T-cell (primary cell): ENCODE measurements at regions of chr3 and their contacts with region 1.

Region 1: GRCh38 chr3:160531311-160531710 is 34.1 kb downstream of the KPNA4 start:
- DNase-seq: no peak
- ATAC-seq: no peak
- H3K4me3 ChIP-seq: no peak overlapping the region
- H3K4me3 Mint-ChIP-seq: no peak overlapping the region
- H3K27ac ChIP-seq: no peak overlapping the region
- H3K27ac Mint-ChIP-seq: peak overlapping the region in 1 of 2 donors; percentile 53
- H3K4me1 ChIP-seq: no peaks in the 10 kb centered on the region
- H3K4me1 Mint-ChIP-seq: peaks cover 2 to 5% (median 3%) of the 10 kb centered on the region in 3 donors
- H3K27me3 ChIP-seq: no peaks in the 10 kb centered on the region
- H3K27me3 Mint-ChIP-seq: no peaks in the 10 kb centered on the region

Region 2: GRCh38 chr3:160454995-160455394 is 76.3 kb before region 1 on chr3:
- CTCF ChIA-PET with region 1: no interaction called
- POLR2A ChIA-PET with region 1: interaction called in 1 of 2 experiments, 12 read pairs
- DNase-seq: no peak
- ATAC-seq: no peak
- H3K4me3 ChIP-seq: no peak overlapping the region
- H3K4me3 Mint-ChIP-seq: no peak overlapping the region
- H3K27ac ChIP-seq: no peak overlapping the region
- H3K27ac Mint-ChIP-seq: no peak overlapping the region
- H3K4me1 ChIP-seq: peaks cover 0 to 4% of the 10 kb centered on the region in 2 experiments
- H3K4me1 Mint-ChIP-seq: peaks cover 5 to 8% (median 7%) of the 10 kb centered on the region in 3 donors
- H3K27me3 ChIP-seq: peaks cover 0 to 7% of the 10 kb centered on the region in 2 experiments
- H3K27me3 Mint-ChIP-seq: no peaks in the 10 kb centered on the region

Region 3: GRCh38 chr3:160498202-160498601 is 33.1 kb before region 1 on chr3:
- CTCF ChIA-PET with region 1: no interaction called
- POLR2A ChIA-PET with region 1: no interaction called
- DNase-seq: no peak
- ATAC-seq: no peak
- H3K4me3 ChIP-seq: no peak overlapping the region
- H3K4me3 Mint-ChIP-seq: no peak overlapping the region
- H3K27ac ChIP-seq: no peak overlapping the region
- H3K27ac Mint-ChIP-seq: no peak overlapping the region
- H3K4me1 ChIP-seq: no peaks in the 10 kb centered on the region
- H3K4me1 Mint-ChIP-seq: no peaks in the 10 kb centered on the region
- H3K27me3 ChIP-seq: no peaks in the 10 kb centered on the region
- H3K27me3 Mint-ChIP-seq: no peaks in the 10 kb centered on the region

Region 4: GRCh38 chr3:160616716-160617115 is 85.4 kb after region 1 on chr3:
- CTCF ChIA-PET with region 1: no interaction called
- POLR2A ChIA-PET with region 1: no interaction called
- DNase-seq: no peak
- ATAC-seq: no peak
- H3K4me3 ChIP-seq: no peak overlapping the region
- H3K4me3 Mint-ChIP-seq: no peak overlapping the region
- H3K27ac ChIP-seq: no peak overlapping the region
- H3K27ac Mint-ChIP-seq: no peak overlapping the region
- H3K4me1 ChIP-seq: no peaks in the 10 kb centered on the region
- H3K4me1 Mint-ChIP-seq: no peaks in the 10 kb centered on the region
- H3K27me3 ChIP-seq: peaks cover 0 to 3% of the 10 kb centered on the region in 2 experiments
- H3K27me3 Mint-ChIP-seq: peaks cover 28 to 29% of the 10 kb centered on the region in 2 donors

Region 5: DNA sequence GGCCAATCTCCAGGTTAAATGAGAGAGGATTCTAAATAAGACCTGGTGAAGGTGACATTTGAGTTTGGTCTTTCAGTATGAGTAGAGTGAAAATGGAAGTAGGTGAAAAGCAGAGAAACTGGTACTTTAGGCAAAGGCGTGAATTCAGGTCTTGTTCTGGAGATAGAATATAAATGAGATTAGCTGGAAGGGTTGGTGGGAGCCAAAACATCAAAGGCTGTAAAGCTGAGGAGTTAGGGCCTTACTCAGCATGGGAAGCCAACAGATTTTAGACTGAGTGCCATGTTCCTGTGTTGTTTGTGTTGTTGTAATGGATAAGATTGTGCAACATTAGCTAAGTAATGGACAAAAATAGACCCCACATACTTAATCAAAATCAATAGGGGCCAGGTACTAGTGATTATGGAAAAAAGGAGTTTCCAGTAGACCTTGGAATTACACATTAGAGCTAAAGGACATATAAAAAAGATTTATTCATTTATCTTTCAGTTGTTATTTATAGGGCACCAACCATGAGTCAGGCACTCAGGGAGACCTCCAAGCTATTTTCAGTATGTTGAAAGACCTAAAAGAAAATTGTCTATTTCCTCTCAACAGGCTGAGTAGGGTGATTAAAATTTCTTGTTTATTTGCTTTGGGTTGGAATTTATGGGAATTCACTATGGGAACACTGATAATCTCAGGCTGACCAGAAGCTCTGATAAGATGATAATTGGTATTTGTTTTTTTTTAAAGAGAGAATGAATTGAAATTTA is 166.5 kb after region 1 on chr3:
- CTCF ChIA-PET with region 1: no interaction called
- POLR2A ChIA-PET with region 1: no interaction called
- DNase-seq: no peak
- ATAC-seq: no peak
- H3K4me3 ChIP-seq: no peak overlapping the region
- H3K4me3 Mint-ChIP-seq: no peak overlapping the region
- H3K27ac ChIP-seq: no peak overlapping the region
- H3K27ac Mint-ChIP-seq: no peak overlapping the region
- H3K4me1 ChIP-seq: no peaks in the 10 kb centered on the region
- H3K4me1 Mint-ChIP-seq: peaks cover 0 to 2% (median 1%) of the 10 kb centered on the region in 3 donors
- H3K27me3 ChIP-seq: peaks cover 0 to 2% of the 10 kb centered on the region in 2 experiments
- H3K27me3 Mint-ChIP-seq: peaks cover 3 to 10% of the 10 kb centered on the region in 2 donors